ENCODE measurements at regions of chr20 and their contacts with region 1.

Region 1: GRCh38 chr20:9616833-9617489 is 102.6 kb downstream of the LAMP5 start:
- DNase-seq: peak in 28 of 35 experiments; percentile 1 to 69 (median 22)
- ATAC-seq: peak in 2 of 4 experiments; percentile 33 to 35
- H3K4me3 ChIP-seq: no peak overlapping the region
- H3K4me3 Mint-ChIP-seq: no peak overlapping the region
- H3K27ac ChIP-seq: no peak overlapping the region
- H3K27ac Mint-ChIP-seq: no peak overlapping the region
- H3K4me1 ChIP-seq: no peaks in the 10 kb centered on the region
- H3K4me1 Mint-ChIP-seq: no peaks in the 10 kb centered on the region
- H3K27me3 ChIP-seq: peaks cover 0 to 8% of the 10 kb centered on the region in 2 experiments
- H3K27me3 Mint-ChIP-seq: peaks cover 1 to 13% of the 10 kb centered on the region in 2 donors

Region 2: DNA sequence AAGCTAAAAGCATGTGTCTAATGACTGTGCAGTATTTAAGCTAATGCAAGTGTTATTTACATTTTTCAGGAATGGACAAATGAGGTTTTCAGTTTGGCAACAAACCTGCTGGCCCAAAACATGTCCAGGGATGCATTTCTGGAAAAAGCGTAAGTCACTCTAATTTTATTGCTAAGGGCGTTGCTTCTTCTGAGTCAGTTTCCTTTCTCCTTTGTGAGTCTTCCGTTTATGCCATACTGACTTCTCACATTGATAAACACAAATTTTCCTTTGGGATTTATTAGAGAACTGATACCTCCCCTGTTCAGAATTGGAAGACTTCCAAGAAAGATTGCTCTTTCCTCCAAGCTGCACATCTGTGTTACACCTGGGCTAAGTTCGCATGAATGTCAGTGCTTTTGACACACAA is 970.9 kb before region 1 on chr20:
- CTCF ChIA-PET with region 1: no interaction called
- POLR2A ChIA-PET with region 1: no interaction called
- DNase-seq: no peak
- ATAC-seq: no peak
- H3K4me3 ChIP-seq: no peak overlapping the region
- H3K4me3 Mint-ChIP-seq: no peak overlapping the region
- H3K27ac ChIP-seq: no peak overlapping the region
- H3K27ac Mint-ChIP-seq: no peak overlapping the region
- H3K4me1 ChIP-seq: no peaks in the 10 kb centered on the region
- H3K4me1 Mint-ChIP-seq: no peaks in the 10 kb centered on the region
- H3K27me3 ChIP-seq: no peaks in the 10 kb centered on the region
- H3K27me3 Mint-ChIP-seq: no peaks in the 10 kb centered on the region

Region 3: DNA sequence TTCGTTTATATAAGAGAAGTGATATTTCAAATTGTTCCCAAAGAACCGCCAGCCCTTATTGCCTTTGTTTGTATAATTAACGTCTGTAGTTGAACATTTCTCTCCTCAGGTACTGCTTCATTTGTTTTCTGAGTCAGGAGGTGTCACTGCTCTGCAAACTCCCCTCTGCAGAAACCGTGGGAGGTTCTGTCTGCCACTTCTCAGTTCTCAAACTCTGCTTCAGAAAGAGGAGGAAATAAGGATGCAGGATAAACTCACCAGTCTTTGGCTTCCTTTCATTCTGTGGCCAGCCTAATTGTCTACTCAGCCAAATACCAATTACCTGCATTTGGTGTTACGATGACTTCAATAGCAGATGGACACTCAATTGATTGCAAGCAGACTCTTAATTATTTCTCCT is 72.1 kb after region 1 on chr20:
- CTCF ChIA-PET with region 1: no interaction called
- POLR2A ChIA-PET with region 1: no interaction called
- DNase-seq: no peak
- ATAC-seq: no peak
- H3K4me3 ChIP-seq: no peak overlapping the region
- H3K4me3 Mint-ChIP-seq: no peak overlapping the region
- H3K27ac ChIP-seq: no peak overlapping the region
- H3K27ac Mint-ChIP-seq: no peak overlapping the region
- H3K4me1 ChIP-seq: no peaks in the 10 kb centered on the region
- H3K4me1 Mint-ChIP-seq: no peaks in the 10 kb centered on the region
- H3K27me3 ChIP-seq: no peaks in the 10 kb centered on the region
- H3K27me3 Mint-ChIP-seq: peaks cover 0 to 3% of the 10 kb centered on the region in 2 donors

Region 4: GRCh38 chr20:10079964-10080363 is 463.0 kb after region 1 on chr20:
- CTCF ChIA-PET with region 1: interaction called in 1 of 2 experiments, 10 read pairs
- POLR2A ChIA-PET with region 1: no interaction called
- DNase-seq: no peak
- ATAC-seq: no peak
- H3K4me3 ChIP-seq: no peak overlapping the region
- H3K4me3 Mint-ChIP-seq: no peak overlapping the region
- H3K27ac ChIP-seq: no peak overlapping the region
- H3K27ac Mint-ChIP-seq: no peak overlapping the region
- H3K4me1 ChIP-seq: no peaks in the 10 kb centered on the region
- H3K4me1 Mint-ChIP-seq: no peaks in the 10 kb centered on the region
- H3K27me3 ChIP-seq: peaks cover 0 to 3% of the 10 kb centered on the region in 2 experiments
- H3K27me3 Mint-ChIP-seq: peaks cover 15 to 21% of the 10 kb centered on the region in 2 donors

Region 5: GRCh38 chr20:10090588-10091166 is 473.7 kb after region 1 on chr20:
- CTCF ChIA-PET with region 1: interaction called, 8 to 11 read pairs
- POLR2A ChIA-PET with region 1: no interaction called
- DNase-seq: peak in 16 of 35 experiments; percentile 0 to 57 (median 6)
- ATAC-seq: peak in 2 of 4 experiments; percentile 54 to 55
- H3K4me3 ChIP-seq: no peak overlapping the region
- H3K4me3 Mint-ChIP-seq: no peak overlapping the region
- H3K27ac ChIP-seq: no peak overlapping the region
- H3K27ac Mint-ChIP-seq: no peak overlapping the region
- H3K4me1 ChIP-seq: no peaks in the 10 kb centered on the region
- H3K4me1 Mint-ChIP-seq: no peaks in the 10 kb centered on the region
- H3K27me3 ChIP-seq: no peaks in the 10 kb centered on the region
- H3K27me3 Mint-ChIP-seq: peaks cover 0 to 2% of the 10 kb centered on the region in 2 donors

Measured in T-cell (primary cell).